GM10248 (cell line): ENCODE measurements at regions of chr1 and their contacts with region 1.

Region 1: GRCh38 chr1:236759252-236759859 is 35.7 kb upstream of the MTR start:
- DNase-seq: peak; percentile 71
- CTCF ChIP-seq: peak; percentile 62

Region 2: DNA sequence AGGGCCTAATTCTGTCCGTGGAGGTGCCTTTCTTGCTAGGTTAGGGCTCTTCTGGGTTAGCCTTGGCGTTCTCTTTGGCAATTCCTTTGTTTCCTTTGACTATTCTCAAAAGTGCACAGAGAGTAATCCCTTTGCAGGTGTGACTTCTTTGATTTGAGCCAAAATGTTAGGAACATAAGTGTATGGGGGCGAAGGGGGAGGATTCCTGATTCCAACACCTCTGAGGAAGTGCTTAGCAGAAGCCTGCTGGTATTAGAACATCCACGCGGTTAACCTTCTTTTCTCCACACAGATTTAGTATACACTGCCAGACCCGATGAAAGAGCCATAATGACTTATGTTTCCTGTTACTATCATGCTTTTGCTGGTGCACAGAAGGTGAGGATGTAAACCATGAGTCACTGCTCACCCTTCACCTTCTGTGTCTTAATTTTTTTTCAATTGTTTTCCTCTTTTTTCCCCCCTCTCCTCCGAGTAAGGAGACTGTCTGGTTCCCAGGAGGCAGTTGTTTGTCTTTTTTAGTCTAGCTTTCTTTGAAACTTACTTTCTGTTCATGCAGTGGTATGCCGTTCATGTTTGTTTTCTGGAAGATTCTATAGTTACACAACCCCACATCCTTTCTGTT is 25.1 kb before region 1 on chr1:
- CTCF ChIA-PET with region 1: interaction called, 11 read pairs
- POLR2A ChIA-PET with region 1: no interaction called
- DNase-seq: no peak
- CTCF ChIP-seq: no peak

Region 3: DNA sequence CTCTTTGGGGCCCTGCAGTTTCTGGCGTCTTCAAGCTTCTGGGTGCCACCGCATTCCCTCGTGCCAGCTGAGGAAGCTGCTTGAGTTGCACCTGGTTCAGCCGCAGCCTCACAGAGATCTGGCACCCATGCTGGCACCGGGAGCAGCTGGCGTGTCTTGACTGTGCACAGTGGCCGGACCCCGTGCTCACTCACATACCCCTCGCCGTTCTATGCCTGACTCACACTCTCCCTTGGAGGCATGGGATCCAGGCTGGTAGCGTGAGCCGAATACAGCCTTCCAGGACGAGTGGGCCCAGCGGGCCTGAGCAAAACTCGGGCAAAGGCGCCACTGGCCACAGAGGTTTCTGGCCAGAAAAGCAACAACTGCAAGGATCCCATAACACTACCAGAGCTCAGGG is 27.1 kb after region 1 on chr1:
- CTCF ChIA-PET with region 1: interaction called, 13 read pairs
- POLR2A ChIA-PET with region 1: no interaction called
- DNase-seq: no peak
- CTCF ChIP-seq: no peak

Region 4: GRCh38 chr1:236868625-236869467 is 109.5 kb after region 1 on chr1:
- CTCF ChIA-PET with region 1: interaction called, 40 read pairs
- POLR2A ChIA-PET with region 1: no interaction called
- DNase-seq: peak; percentile 37
- CTCF ChIP-seq: peak; percentile 90

Region 5: GRCh38 chr1:237562242-237562823 is 803.0 kb after region 1 on chr1:
- CTCF ChIA-PET with region 1: interaction called, 18 read pairs
- POLR2A ChIA-PET with region 1: no interaction called
- DNase-seq: peak; percentile 27
- CTCF ChIP-seq: peak; percentile 79